MCF 10A (cell line): ENCODE measurements at regions of chr16 and their contacts with region 1.

Region 1: GRCh38 chr16:11851294-11852091 is at the start of gene RSL1D1:
- DNase-seq: peak; percentile 92
- H3K4me3 Mint-ChIP-seq: peak within 1 kb of the TSS; percentile 93
- H3K27ac Mint-ChIP-seq: peak within 1 kb of the TSS; percentile 90
- H3K4me1 Mint-ChIP-seq: peaks cover 22% of the 10 kb centered on the region
- H3K27me3 Mint-ChIP-seq: no peaks in the 10 kb centered on the region
- CTCF ChIP-seq: no peak
- total RNA-seq, gene RSL1D1: 302 and 406 TPM in 2 replicates

Region 2: GRCh38 chr16:11797166-11797956 is 54.1 kb before region 1 on chr16 and contains the start of gene ZC3H7A:
- CTCF ChIA-PET with region 1: interaction called, 6 read pairs
- POLR2A ChIA-PET with region 1: interaction called, 26 read pairs
- intact Hi-C with region 1: no loop called
- DNase-seq: peak; percentile 97
- H3K4me3 Mint-ChIP-seq: peak within 1 kb of the TSS; percentile 91
- H3K27ac Mint-ChIP-seq: peak within 1 kb of the TSS; percentile 99
- H3K4me1 Mint-ChIP-seq: peaks cover 32% of the 10 kb centered on the region
- H3K27me3 Mint-ChIP-seq: no peaks in the 10 kb centered on the region
- CTCF ChIP-seq: peak; percentile 81
- total RNA-seq, gene ZC3H7A: 66.9 and 74.1 TPM in 2 replicates

Region 3: DNA sequence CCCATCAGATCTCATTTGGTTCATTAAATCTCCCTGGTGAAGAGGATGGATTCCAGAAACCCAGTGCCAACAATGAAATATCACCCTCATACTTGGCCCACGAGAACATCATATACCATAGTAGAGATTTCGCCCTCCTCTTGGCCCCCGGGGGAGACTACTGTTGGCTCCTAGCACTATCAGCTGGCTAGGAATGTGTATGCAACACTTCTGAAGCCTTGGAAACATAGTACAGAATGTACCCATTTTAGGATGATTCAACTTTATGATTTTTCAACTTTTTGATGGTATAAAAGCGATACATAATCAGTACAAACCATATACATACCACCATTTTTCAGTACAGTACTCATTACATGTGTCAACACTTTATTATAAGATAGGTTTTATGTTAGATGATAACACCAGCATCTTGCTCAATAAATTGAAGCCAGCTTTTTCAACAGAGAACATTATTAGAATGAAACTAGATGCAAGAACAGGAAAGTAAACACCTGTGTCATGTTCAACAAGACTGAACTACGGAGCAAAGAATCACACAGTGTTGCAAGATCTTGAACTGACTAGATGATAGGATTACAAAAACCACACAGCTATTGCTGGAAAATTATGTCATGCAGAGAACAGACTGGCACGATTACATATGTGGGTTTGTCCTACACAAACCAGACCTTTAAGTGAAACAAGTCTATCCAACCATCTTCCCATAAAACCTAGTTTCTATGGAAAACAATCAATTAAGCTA is 17.4 kb before region 1 on chr16:
- CTCF ChIA-PET with region 1: interaction called, 15 read pairs
- POLR2A ChIA-PET with region 1: interaction called, 72 read pairs
- intact Hi-C with region 1: no loop called
- DNase-seq: peak; percentile 92
- H3K4me3 Mint-ChIP-seq: peak overlapping the region; percentile 63
- H3K27ac Mint-ChIP-seq: peak overlapping the region; percentile 98
- H3K4me1 Mint-ChIP-seq: peaks cover 19% of the 10 kb centered on the region
- H3K27me3 Mint-ChIP-seq: no peaks in the 10 kb centered on the region
- CTCF ChIP-seq: no peak

Region 4: DNA sequence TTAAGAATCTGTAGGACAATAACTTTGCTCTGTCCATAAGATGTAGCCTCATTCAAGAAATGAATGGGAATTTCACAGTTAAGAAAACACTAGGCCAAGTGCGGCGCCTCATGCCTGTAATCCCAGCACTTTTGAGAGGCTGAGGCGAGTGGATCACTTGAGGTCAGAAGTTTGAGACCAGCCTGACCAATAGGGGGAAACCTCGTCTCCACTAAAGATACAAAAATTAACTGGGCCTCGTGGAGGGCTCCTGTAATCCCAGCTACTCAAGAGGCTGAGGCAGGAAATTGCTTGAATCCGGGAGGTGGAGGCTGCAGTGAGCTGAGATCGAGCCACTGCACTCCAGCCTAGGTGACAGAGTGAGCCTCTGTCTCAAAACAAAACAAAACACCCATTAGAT is 19.7 kb after region 1 on chr16:
- CTCF ChIA-PET with region 1: interaction called, 6 read pairs
- POLR2A ChIA-PET with region 1: interaction called, 13 read pairs
- intact Hi-C with region 1: no loop called
- DNase-seq: peak; percentile 19
- H3K4me3 Mint-ChIP-seq: no peak overlapping the region
- H3K27ac Mint-ChIP-seq: no peak overlapping the region
- H3K4me1 Mint-ChIP-seq: peaks cover 6% of the 10 kb centered on the region
- H3K27me3 Mint-ChIP-seq: no peaks in the 10 kb centered on the region
- CTCF ChIP-seq: peak; percentile 7

Region 5: DNA sequence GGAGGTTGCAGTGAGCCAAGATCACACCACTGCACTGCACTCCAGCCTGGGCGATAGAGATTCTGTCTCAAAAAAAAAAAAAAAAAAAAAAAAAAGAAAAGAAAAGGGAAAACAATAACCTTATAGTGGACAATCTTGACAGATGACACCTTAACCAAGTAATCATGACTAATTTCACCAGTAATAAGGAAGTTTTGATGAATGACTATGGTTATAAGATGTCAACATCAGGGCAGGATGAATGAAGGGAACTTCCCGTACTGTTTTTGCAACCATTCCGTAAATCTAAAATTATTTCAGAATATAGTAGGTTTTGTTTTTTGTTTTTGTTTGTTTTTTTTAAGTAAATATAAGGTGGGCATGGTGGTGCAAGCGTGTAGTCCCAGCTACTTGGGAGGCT is 41.3 kb after region 1 on chr16:
- CTCF ChIA-PET with region 1: no interaction called
- POLR2A ChIA-PET with region 1: no interaction called
- intact Hi-C with region 1: no loop called
- DNase-seq: no peak
- H3K4me3 Mint-ChIP-seq: no peak overlapping the region
- H3K27ac Mint-ChIP-seq: no peak overlapping the region
- H3K4me1 Mint-ChIP-seq: peaks cover 6% of the 10 kb centered on the region
- H3K27me3 Mint-ChIP-seq: no peaks in the 10 kb centered on the region
- CTCF ChIP-seq: no peak

Region 6: GRCh38 chr16:11915644-11916523 is 64.4 kb after region 1 on chr16 and contains the start of gene GSPT1:
- CTCF ChIA-PET with region 1: interaction called, 4 read pairs
- POLR2A ChIA-PET with region 1: interaction called, 16 read pairs
- intact Hi-C with region 1: no loop called
- DNase-seq: peak; percentile 98
- H3K4me3 Mint-ChIP-seq: peak within 1 kb of the TSS; percentile 88
- H3K27ac Mint-ChIP-seq: peak within 1 kb of the TSS; percentile 71
- H3K4me1 Mint-ChIP-seq: peaks cover 15% of the 10 kb centered on the region
- H3K27me3 Mint-ChIP-seq: no peaks in the 10 kb centered on the region
- CTCF ChIP-seq: no peak
- total RNA-seq, gene GSPT1: 163 and 199 TPM in 2 replicates

Region 7: GRCh38 chr16:11955713-11956123 is 104.2 kb after region 1 on chr16:
- CTCF ChIA-PET with region 1: no interaction called
- POLR2A ChIA-PET with region 1: no interaction called
- intact Hi-C with region 1: no loop called
- DNase-seq: peak; percentile 66
- H3K4me3 Mint-ChIP-seq: no peak overlapping the region
- H3K27ac Mint-ChIP-seq: no peak overlapping the region
- H3K4me1 Mint-ChIP-seq: peaks cover 6% of the 10 kb centered on the region
- H3K27me3 Mint-ChIP-seq: no peaks in the 10 kb centered on the region
- CTCF ChIP-seq: no peak